Natural killer cell (primary cell): ENCODE measurements at regions of chr6 and their contacts with region 1.

Region 1: GRCh38 chr6:109526905-109527628 is 44.0 kb upstream of the ZBTB24 start:
- DNase-seq: peak in 1 of 2 donors; percentile 79
- ATAC-seq: peak; percentile 67 to 79 (median 68)
- H3K4me3 ChIP-seq: no peak overlapping the region
- H3K4me3 Mint-ChIP-seq: no peak overlapping the region
- H3K27ac ChIP-seq: no peak overlapping the region
- H3K27ac Mint-ChIP-seq: no peak overlapping the region
- H3K4me1 ChIP-seq: no peaks in the 10 kb centered on the region
- H3K4me1 Mint-ChIP-seq: peaks cover 0 to 5% of the 10 kb centered on the region in 2 donors
- H3K27me3 ChIP-seq: no peaks in the 10 kb centered on the region
- H3K27me3 Mint-ChIP-seq: no peaks in the 10 kb centered on the region
- CTCF ChIP-seq: peak; percentile 62

Region 2: DNA sequence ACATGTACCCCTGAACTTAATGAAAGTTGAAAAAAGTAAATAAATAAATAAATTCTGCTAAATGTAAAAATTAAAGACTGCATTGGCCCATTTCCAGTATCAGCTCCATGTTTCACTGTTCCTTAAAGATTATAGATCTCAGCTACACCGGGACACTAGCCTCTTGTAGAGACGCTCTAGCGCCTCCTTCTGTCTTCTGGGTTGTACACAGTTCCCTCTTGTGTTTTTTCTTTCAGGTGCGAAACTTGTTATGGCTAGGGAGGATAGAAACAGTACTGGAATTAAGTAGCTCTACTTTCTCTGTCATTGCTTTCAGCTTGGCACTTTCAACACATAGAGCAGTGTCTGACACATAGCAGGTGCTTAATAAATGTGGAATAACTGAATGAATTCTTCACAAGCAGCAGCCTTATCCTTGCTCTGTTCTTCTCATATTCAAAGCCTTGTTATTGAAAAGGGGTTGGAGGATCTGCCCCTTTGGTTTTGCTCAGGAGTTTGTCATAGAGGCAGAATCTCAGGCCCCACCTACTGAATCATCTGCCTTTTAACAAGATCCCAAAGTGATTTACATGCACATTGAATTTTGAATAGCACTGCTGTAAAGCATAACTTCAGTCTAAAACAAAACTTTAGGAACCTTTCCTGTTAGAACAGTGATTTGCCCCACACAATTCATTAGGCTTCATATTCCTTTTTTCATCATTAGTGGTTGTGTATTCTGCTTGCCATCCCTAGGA is 256.4 kb after region 1 on chr6:
- intact Hi-C with region 1: loop called (anchors 2 kb)
- DNase-seq: peak in 1 of 2 donors; percentile 16
- ATAC-seq: peak; percentile 42 to 69 (median 56)
- H3K4me3 ChIP-seq: no peak overlapping the region
- H3K4me3 Mint-ChIP-seq: no peak overlapping the region
- H3K27ac ChIP-seq: no peak overlapping the region
- H3K27ac Mint-ChIP-seq: no peak overlapping the region
- H3K4me1 ChIP-seq: no peaks in the 10 kb centered on the region
- H3K4me1 Mint-ChIP-seq: peaks cover 0 to 5% of the 10 kb centered on the region in 2 donors
- H3K27me3 ChIP-seq: no peaks in the 10 kb centered on the region
- H3K27me3 Mint-ChIP-seq: no peaks in the 10 kb centered on the region
- CTCF ChIP-seq: peak; percentile 42

Region 3: DNA sequence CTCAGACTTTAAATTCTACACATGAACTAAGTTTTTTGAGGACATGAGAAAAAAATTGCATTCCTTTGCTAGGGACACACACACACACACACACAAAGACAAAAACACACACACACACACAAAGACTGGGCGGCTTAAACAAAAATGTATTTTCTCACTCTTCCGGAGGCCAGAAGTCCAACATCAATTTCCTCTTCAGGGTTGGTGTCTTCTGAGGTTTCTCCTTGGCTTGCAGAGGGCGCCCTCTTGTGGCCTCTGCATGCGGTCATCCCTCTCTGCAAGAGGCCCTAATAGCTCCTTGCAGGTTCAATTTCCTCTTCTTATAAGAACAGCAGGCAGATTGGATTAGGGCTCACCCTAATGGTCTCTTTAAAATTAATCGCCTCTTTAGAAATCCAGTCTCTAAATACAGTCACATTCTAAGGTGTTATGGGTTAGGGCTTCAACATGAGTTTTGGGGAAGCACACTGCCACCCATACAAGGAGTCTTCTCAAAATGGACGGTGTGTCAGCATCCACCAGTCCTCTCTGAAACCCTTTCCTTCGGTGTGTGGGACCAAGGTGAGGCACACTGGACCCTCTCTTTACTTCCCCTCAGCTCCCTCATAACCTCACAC is 512.4 kb after region 1 on chr6:
- intact Hi-C with region 1: loop called (anchors 2 kb)
- DNase-seq: peak; percentile 79 to 91
- ATAC-seq: peak; percentile 87 to 90 (median 89)
- H3K4me3 ChIP-seq: peak overlapping the region; percentile 40
- H3K4me3 Mint-ChIP-seq: peak overlapping the region; percentile 89
- H3K27ac ChIP-seq: peak overlapping the region; percentile 77
- H3K27ac Mint-ChIP-seq: peak overlapping the region; percentile 92 to 98
- H3K4me1 ChIP-seq: peaks cover 38% of the 10 kb centered on the region
- H3K4me1 Mint-ChIP-seq: peaks cover 26 to 36% of the 10 kb centered on the region in 2 donors
- H3K27me3 ChIP-seq: no peaks in the 10 kb centered on the region
- H3K27me3 Mint-ChIP-seq: no peaks in the 10 kb centered on the region
- CTCF ChIP-seq: peak; percentile 73

Region 4: DNA sequence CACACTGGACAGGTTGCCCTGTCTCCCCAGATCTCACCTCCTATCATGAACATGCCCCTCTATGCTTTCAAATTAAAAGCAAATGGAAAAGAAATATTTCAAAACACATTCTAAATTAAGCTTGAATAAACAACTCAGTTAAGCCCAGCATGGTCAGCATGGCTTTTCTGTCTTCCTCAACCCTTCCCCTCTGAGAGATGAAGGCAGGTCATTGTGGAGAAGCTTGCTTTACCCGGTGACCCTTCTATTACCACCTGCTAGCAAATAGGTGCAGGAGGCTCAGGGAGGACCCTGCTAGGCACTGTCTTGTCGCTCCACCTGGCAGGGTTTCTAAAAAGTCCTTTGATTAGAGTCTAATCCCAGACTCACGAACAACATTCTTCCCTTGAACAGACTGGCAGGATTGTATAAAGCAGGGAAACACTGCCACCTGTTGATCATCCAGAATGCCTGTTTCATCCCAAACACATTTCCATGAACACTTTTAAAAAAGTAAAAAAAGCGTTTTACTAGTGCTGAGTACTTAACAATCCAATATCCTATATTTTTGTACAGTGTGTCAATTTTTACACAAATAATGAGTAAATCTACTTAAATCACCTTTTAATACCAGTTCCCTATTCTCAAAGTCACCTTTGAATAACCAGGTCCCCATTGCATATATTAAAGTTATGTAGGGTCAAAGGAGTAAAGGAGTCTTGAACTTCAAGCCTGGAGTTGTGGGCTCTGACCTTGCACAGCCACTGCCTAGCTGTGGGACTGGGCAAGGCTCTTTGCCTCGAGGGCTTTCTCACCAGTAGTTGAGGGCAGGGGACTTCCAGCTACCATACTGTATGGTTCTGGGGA is 526.6 kb after region 1 on chr6:
- intact Hi-C with region 1: loop called (anchors 1 kb)
- DNase-seq: peak in 1 of 2 donors; percentile 57
- ATAC-seq: peak in 1 of 3 donors; percentile 41
- H3K4me3 ChIP-seq: no peak overlapping the region
- H3K4me3 Mint-ChIP-seq: no peak overlapping the region
- H3K27ac ChIP-seq: no peak overlapping the region
- H3K27ac Mint-ChIP-seq: no peak overlapping the region
- H3K4me1 ChIP-seq: peaks cover 10% of the 10 kb centered on the region
- H3K4me1 Mint-ChIP-seq: peaks cover 20 to 22% of the 10 kb centered on the region in 2 donors
- H3K27me3 ChIP-seq: peaks cover 3% of the 10 kb centered on the region
- H3K27me3 Mint-ChIP-seq: peaks cover 15 to 25% of the 10 kb centered on the region in 2 donors
- CTCF ChIP-seq: peak; percentile 57

Region 5: GRCh38 chr6:110389689-110390382 is 862.8 kb after region 1 on chr6:
- intact Hi-C with region 1: loop called (anchors 1 kb)
- DNase-seq: no peak
- ATAC-seq: peak; percentile 42 to 82 (median 50)
- H3K4me3 ChIP-seq: no peak overlapping the region
- H3K4me3 Mint-ChIP-seq: peak overlapping the region; percentile 73
- H3K27ac ChIP-seq: peak overlapping the region; percentile 24
- H3K27ac Mint-ChIP-seq: peak overlapping the region; percentile 70 to 73
- H3K4me1 ChIP-seq: peaks cover 7% of the 10 kb centered on the region
- H3K4me1 Mint-ChIP-seq: peaks cover 21 to 26% of the 10 kb centered on the region in 2 donors
- H3K27me3 ChIP-seq: no peaks in the 10 kb centered on the region
- H3K27me3 Mint-ChIP-seq: no peaks in the 10 kb centered on the region
- CTCF ChIP-seq: no peak